CD14-positive monocyte (primary cell): ENCODE measurements at regions of chr14 and their contacts with region 1.

Region 1: DNA sequence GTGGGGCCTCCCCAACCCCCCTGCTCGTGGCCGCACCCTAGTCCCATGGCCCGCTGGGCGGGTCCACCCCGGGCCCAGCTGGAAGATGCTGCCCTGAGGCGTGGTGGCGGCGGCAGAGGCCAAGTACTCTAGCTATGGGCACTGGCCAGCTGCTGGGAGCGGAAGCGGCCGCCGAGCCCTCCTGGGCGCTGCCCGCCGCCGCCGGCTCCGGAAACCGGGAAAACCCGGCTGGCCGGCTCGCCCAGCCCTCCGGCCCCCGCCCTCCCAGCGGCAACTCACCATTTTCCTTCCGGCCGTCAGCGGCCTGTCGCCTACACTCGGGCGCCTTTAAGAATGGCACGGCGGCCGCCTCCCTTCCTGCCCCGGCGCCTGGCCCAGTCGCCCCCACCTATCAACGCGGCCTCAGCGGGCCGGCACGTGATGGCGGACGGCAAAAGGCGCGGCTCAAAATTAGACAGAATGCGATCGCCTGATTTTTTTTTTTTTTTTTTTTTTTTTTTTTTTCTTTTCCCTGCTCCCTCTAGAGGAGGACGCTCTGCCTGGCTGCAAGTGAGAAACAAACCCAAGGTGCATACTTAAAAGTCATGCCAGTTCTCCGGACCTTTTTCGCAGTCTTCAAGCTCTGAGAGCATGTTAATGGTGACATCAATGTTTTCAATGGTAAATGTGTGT is at the start of gene GMFB:
- DNase-seq: peak; percentile 86 to 95 (median 93)
- H3K4me3 ChIP-seq: peak within 1 kb of the TSS; percentile 70 to 90 (median 73)
- H3K4me3 Mint-ChIP-seq: peak within 1 kb of the TSS; percentile 86 to 92
- H3K27ac ChIP-seq: peak within 1 kb of the TSS; percentile 81 to 93
- H3K27ac Mint-ChIP-seq: peak within 1 kb of the TSS; percentile 88 to 95 (median 93)
- H3K4me1 ChIP-seq: peaks cover 44 to 62% of the 10 kb centered on the region in 2 donors
- H3K4me1 Mint-ChIP-seq: peaks cover 68% of the 10 kb centered on the region
- H3K27me3 ChIP-seq: no peaks in the 10 kb centered on the region
- H3K27me3 Mint-ChIP-seq: peaks cover 0 to 2% (median 0%) of the 10 kb centered on the region in 3 donors
- CTCF ChIP-seq: peak; percentile 22
- polyA plus RNA-seq, gene GMFB: 10.8 to 41.1 (median 26.1) TPM

Region 2: DNA sequence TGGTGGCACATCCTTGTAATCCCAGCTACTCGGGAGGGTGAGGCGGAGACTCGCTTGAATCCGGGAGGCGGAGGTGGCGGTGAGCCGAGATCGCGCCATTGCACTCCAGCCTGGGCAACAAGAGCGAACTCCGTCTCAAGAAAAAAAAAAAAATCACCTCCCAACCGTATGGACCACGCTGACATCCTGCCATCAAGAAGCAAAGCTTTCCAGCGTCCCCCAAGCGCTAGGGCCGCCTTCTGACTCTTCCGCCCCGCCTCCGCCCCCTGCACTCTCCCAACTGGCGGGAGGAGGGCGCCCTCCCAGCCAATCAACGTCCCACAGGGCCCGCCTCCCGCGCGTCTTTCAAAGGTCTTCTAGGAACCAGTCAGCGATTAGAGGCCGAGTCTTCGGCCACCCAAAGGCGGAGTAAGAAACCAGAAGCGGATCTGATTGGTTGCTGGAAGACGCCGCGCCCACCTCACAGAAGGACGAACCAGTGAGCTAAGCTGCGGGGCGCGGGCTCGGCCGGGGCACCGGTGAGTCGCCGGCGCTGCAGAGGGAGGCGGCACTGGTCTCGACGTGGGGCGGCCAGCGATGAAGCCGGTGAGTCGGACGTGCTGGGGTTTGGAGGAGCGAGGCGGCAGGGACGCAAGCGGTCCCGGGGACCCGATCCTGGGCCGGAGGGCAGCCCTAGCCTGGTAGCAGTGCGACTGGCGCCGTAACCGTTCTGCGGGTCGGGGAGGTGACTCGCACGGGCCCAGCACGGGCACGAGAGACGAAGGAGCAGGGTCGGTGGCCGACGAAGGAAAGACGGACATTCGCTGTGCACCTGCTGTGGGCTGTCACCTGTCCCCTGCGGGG is 92.1 kb before region 1 on chr14 and contains the start of gene CDKN3:
- intact Hi-C with region 1: loop called in 1 of 2 experiments (anchors 5 kb)
- DNase-seq: peak; percentile 97 to 99 (median 98)
- H3K4me3 ChIP-seq: peak within 1 kb of the TSS; percentile 85 to 96 (median 90)
- H3K4me3 Mint-ChIP-seq: peak within 1 kb of the TSS; percentile 83 to 93
- H3K27ac ChIP-seq: peak within 1 kb of the TSS in 1 of 2 donors; percentile 78
- H3K27ac Mint-ChIP-seq: peak within 1 kb of the TSS in 6 of 7 donors; percentile 20 to 85 (median 72)
- H3K4me1 ChIP-seq: peaks cover 27 to 31% of the 10 kb centered on the region in 2 donors
- H3K4me1 Mint-ChIP-seq: peaks cover 25% of the 10 kb centered on the region
- H3K27me3 ChIP-seq: no peaks in the 10 kb centered on the region
- H3K27me3 Mint-ChIP-seq: peaks cover 0 to 2% (median under 1%) of the 10 kb centered on the region in 3 donors
- CTCF ChIP-seq: no peak
- polyA plus RNA-seq, gene CDKN3: 0.45 to 1.8 (median 0.65) TPM

Region 3: GRCh38 chr14:54450535-54450934 is 38.2 kb before region 1 on chr14:
- intact Hi-C with region 1: loop called (anchors 5 kb)
- DNase-seq: peak; percentile 85 to 98 (median 95)
- H3K4me3 ChIP-seq: peak overlapping the region in 1 of 3 experiments; percentile 8
- H3K4me3 Mint-ChIP-seq: peak overlapping the region in 1 of 2 donors; percentile 73
- H3K27ac ChIP-seq: peak overlapping the region; percentile 47 to 87
- H3K27ac Mint-ChIP-seq: peak overlapping the region; percentile 91 to 96 (median 92)
- H3K4me1 ChIP-seq: peaks cover 58 to 69% of the 10 kb centered on the region in 2 donors
- H3K4me1 Mint-ChIP-seq: peaks cover 59% of the 10 kb centered on the region
- H3K27me3 ChIP-seq: no peaks in the 10 kb centered on the region
- H3K27me3 Mint-ChIP-seq: peaks cover 0 to 3% (median 0%) of the 10 kb centered on the region in 3 donors
- CTCF ChIP-seq: no peak